ENCODE measurements at regions of chr1 and their contacts with region 1.

Region 1: DNA sequence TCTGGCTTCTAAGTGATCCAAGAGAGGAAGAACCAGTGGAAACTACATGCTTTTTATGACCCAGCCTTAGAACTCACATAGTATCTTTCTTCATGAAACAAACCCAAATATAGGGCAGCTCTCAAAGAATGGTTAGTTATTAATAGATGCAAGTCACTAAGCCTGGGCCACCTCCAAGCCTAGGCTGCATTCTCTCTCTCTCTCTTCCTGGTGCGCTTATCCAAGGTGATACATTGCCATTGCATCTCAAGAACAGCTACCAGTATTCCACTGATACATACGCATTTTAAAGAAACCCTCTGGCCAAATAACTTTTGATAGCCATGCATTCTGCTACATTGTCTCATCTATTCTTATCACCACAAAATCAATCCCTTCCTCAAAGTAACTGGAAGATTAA is 455.6 kb upstream of the ADGRL2 start:
- DNase-seq: no peak
- ATAC-seq: no peak
- H3K4me3 ChIP-seq: no peak overlapping the region
- H3K27ac ChIP-seq: no peak overlapping the region
- H3K4me1 ChIP-seq: no peaks in the 10 kb centered on the region
- H3K27me3 ChIP-seq: no peaks in the 10 kb centered on the region
- CTCF ChIP-seq: no peak
- POLR2A ChIP-seq: no peak
- RAD21 ChIP-seq: no peak

Region 2: GRCh38 chr1:81617308-81617967 is 272.3 kb after region 1 on chr1:
- CTCF ChIA-PET with region 1: no interaction called
- POLR2A ChIA-PET with region 1: no interaction called
- dilution Hi-C with region 1: no loop called
- in situ Hi-C with region 1: no loop called
- intact Hi-C with region 1: no loop called
- DNase-seq: peak; percentile 4
- ATAC-seq: no peak
- H3K4me3 ChIP-seq: no peak overlapping the region
- H3K27ac ChIP-seq: no peak overlapping the region
- H3K4me1 ChIP-seq: no peaks in the 10 kb centered on the region
- H3K27me3 ChIP-seq: no peaks in the 10 kb centered on the region
- CTCF ChIP-seq: no peak
- POLR2A ChIP-seq: no peak
- RAD21 ChIP-seq: no peak

Region 3: DNA sequence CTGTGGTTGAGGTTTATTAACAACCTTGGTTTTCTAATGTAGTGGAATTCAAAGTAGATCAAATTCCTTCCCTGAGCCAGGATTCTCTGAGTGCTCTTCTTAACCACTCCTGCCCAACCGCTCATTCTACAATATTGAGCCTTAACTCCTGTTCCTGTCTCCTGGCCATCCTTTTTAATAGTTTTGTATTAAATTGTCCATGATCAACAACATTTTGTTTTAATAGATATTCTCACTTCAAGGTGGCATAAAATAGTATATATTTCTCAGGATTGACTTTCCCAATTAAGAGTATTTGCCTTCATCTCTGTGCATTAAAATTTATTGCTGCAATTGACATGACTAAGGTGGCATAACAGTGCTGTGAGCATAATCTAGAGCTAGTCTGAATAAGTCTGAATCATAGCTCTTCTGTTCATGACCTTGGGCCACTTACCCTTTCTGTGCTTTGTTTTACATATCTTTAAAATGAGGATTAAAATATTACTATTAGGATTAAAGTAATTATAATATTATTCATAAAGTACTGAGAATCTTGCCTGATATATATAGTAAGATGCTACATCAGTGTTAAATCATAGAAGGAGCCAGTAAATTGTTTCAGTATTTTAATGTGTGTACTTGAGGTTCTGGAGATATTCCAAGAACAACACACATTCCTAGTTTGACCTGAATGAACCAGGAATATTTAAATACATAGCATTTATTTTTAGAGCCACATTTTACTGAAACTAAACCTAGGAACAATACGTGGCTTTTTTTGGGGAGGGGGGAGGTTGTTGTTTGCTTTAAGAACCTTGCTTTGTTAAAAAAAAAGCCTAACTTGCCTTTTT is 532.0 kb after region 1 on chr1:
- CTCF ChIA-PET with region 1: no interaction called
- POLR2A ChIA-PET with region 1: no interaction called
- dilution Hi-C with region 1: no loop called
- in situ Hi-C with region 1: no loop called
- intact Hi-C with region 1: no loop called
- DNase-seq: peak; percentile 46
- ATAC-seq: peak; percentile 35; the same call in 1 of the 2 replicates
- H3K4me3 ChIP-seq: no peak overlapping the region
- H3K27ac ChIP-seq: no peak overlapping the region
- H3K4me1 ChIP-seq: peaks cover 2% of the 10 kb centered on the region; the same call in 1 of the 2 replicates
- H3K27me3 ChIP-seq: no peaks in the 10 kb centered on the region
- CTCF ChIP-seq: no peak
- POLR2A ChIP-seq: no peak
- RAD21 ChIP-seq: no peak

Region 4: GRCh38 chr1:81967951-81968350 is 622.8 kb after region 1 on chr1:
- CTCF ChIA-PET with region 1: no interaction called
- POLR2A ChIA-PET with region 1: interaction called, 16 read pairs
- dilution Hi-C with region 1: no loop called
- in situ Hi-C with region 1: no loop called
- intact Hi-C with region 1: no loop called
- DNase-seq: no peak
- ATAC-seq: no peak
- H3K4me3 ChIP-seq: no peak overlapping the region
- H3K27ac ChIP-seq: no peak overlapping the region
- H3K4me1 ChIP-seq: no peaks in the 10 kb centered on the region
- H3K27me3 ChIP-seq: no peaks in the 10 kb centered on the region
- CTCF ChIP-seq: no peak
- POLR2A ChIP-seq: no peak
- RAD21 ChIP-seq: no peak

Measured in IMR-90 (cell line).